ENCODE measurements at regions of chr3 and their contacts with region 1.

Region 1: GRCh38 chr3:45978006-45978761 is 17.4 kb downstream of the FYCO1 start:
- DNase-seq: peak; percentile 58
- H3K4me3 Mint-ChIP-seq: peak overlapping the region; percentile 81
- H3K27ac Mint-ChIP-seq: peak overlapping the region; percentile 98
- H3K4me1 Mint-ChIP-seq: peaks cover 74% of the 10 kb centered on the region
- H3K27me3 Mint-ChIP-seq: no peaks in the 10 kb centered on the region

Region 2: GRCh38 chr3:45647148-45647619 is 331.0 kb before region 1 on chr3:
- intact Hi-C with region 1: no loop called
- DNase-seq: no peak
- H3K4me3 Mint-ChIP-seq: no peak overlapping the region
- H3K27ac Mint-ChIP-seq: no peak overlapping the region
- H3K4me1 Mint-ChIP-seq: peaks cover 18% of the 10 kb centered on the region
- H3K27me3 Mint-ChIP-seq: no peaks in the 10 kb centered on the region

Region 3: DNA sequence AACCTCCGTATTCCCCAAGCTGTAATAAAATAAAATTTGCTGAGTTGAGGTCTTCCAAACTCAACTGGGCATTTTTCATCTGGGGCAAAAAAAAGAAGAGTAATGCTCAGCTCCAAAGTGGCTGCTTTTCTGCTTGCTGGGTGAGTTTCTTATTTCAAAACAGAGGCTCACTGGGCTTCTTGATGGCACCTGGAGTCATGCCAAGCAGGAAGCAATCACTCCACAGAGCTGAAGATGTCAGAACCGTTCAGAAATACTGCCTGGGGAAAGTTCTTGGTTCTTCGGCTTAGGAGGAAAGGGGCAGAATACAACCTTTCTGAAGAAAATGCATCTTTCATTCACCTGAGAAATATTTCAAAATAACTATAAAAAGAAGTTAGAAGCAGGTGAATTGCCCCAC is 87.8 kb before region 1 on chr3:
- intact Hi-C with region 1: no loop called
- DNase-seq: no peak
- H3K4me3 Mint-ChIP-seq: no peak overlapping the region
- H3K27ac Mint-ChIP-seq: no peak overlapping the region
- H3K4me1 Mint-ChIP-seq: peaks cover 12% of the 10 kb centered on the region
- H3K27me3 Mint-ChIP-seq: peaks cover 71% of the 10 kb centered on the region

Region 4: DNA sequence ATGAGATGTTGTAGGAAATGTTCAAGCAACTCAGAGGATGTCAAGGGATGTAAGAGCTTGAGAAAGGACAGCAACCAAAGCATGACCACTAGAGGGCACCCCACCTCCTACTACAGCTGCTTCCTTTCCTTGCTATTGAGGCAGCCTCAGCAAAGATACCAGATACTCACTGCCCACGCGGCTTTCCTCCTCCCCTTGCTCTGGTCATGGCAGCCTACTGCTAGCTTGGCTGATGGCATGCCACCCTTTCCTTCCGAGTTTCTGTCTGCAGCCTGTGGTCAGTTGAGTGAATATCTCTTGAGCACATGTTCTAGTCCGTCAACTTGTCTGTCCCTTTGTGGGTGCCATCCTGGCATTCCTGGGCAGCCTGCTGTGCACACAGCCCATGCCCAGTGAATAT is 39.3 kb before region 1 on chr3:
- intact Hi-C with region 1: loop called (anchors 1 kb)
- DNase-seq: peak; percentile 75
- H3K4me3 Mint-ChIP-seq: no peak overlapping the region
- H3K27ac Mint-ChIP-seq: no peak overlapping the region
- H3K4me1 Mint-ChIP-seq: peaks cover 44% of the 10 kb centered on the region
- H3K27me3 Mint-ChIP-seq: no peaks in the 10 kb centered on the region

Region 5: GRCh38 chr3:45962033-45962432 is 16.2 kb before region 1 on chr3:
- intact Hi-C with region 1: loop called (anchors 1 kb)
- DNase-seq: no peak
- H3K4me3 Mint-ChIP-seq: no peak overlapping the region
- H3K27ac Mint-ChIP-seq: peak overlapping the region; percentile 63
- H3K4me1 Mint-ChIP-seq: peaks cover 56% of the 10 kb centered on the region
- H3K27me3 Mint-ChIP-seq: no peaks in the 10 kb centered on the region

Region 6: DNA sequence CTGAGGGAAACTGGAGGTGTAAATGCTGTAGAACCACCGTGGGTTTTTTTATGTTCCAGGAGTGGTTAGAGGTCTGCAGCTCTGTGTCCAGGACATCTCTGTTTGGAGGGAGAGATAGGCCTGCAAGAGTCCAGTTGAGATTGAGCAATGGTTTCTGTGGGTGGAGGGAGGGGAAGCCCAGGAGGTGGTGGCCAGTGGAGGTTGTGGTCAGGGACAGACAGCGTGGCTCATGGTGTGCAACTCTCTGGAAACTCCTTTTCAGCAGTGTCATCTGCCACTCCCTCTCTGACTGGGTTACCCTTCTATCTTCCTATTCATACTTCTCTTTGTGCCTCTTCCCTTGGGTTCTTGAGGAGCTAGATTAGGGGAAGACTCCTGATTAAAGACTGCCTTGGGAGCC is 39.5 kb after region 1 on chr3:
- intact Hi-C with region 1: loop called (anchors 1 kb)
- DNase-seq: no peak
- H3K4me3 Mint-ChIP-seq: peak overlapping the region; percentile 24
- H3K27ac Mint-ChIP-seq: peak overlapping the region; percentile 70
- H3K4me1 Mint-ChIP-seq: peaks cover 48% of the 10 kb centered on the region
- H3K27me3 Mint-ChIP-seq: peaks cover 7% of the 10 kb centered on the region

Region 7: DNA sequence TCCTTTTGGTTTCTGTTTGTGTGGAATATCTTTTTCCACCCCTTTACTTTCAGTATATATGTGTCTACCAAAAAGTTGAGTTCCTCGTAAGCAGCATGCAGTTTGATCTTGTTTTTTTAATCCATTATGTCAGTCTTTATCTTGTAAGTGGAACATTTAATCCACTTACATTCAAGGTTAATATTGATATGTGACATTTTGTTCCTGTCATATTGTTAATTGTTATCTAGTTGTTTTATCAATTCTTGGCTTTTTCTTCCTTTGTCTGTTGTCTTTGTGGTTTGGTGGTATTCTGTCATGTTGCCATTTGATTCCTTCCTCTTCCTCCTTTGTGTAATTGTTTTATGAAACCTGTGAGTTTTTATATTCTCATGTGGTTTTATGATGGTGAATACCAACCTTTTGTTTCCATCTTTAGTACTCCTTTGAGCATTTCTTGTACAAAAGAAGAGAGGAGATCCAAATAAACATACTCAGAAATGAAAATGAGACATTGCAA is 92.5 kb after region 1 on chr3:
- intact Hi-C with region 1: loop called (anchors 1 kb)
- DNase-seq: no peak
- H3K4me3 Mint-ChIP-seq: peak overlapping the region; percentile 3
- H3K27ac Mint-ChIP-seq: peak overlapping the region; percentile 70
- H3K4me1 Mint-ChIP-seq: peaks cover 60% of the 10 kb centered on the region
- H3K27me3 Mint-ChIP-seq: peaks cover 26% of the 10 kb centered on the region